ENCODE measurements at regions of chr12 and their contacts with region 1.

Region 1: GRCh38 chr12:575948-576612 is 87.2 kb downstream of the NINJ2 start:
- DNase-seq: peak; percentile 40
- ATAC-seq: peak; percentile 99
- H3K4me3 ChIP-seq: no peak overlapping the region
- H3K27ac ChIP-seq: peak overlapping the region; percentile 26
- H3K4me1 ChIP-seq: peaks cover 10% of the 10 kb centered on the region
- H3K27me3 ChIP-seq: no peaks in the 10 kb centered on the region
- CTCF ChIP-seq: peak; percentile 90 to 99 (median 96)
- EP300 ChIP-seq: no peak
- POLR2A ChIP-seq: peak; percentile 59
- RAD21 ChIP-seq: peak; percentile 79

Region 2: GRCh38 chr12:630656-631632 is 54.9 kb after region 1 on chr12:
- CTCF ChIA-PET with region 1: interaction called, 18 read pairs
- POLR2A ChIA-PET with region 1: interaction called, 3 read pairs
- RAD21 ChIA-PET with region 1: no interaction called
- SMC1A ChIA-PET with region 1: interaction called, 3 read pairs
- in situ Hi-C with region 1: no loop called
- intact Hi-C with region 1: no loop called
- DNase-seq: no peak
- ATAC-seq: peak; percentile 98
- H3K4me3 ChIP-seq: peak overlapping the region; percentile 60
- H3K27ac ChIP-seq: peak overlapping the region; percentile 92
- H3K4me1 ChIP-seq: peaks cover 16% of the 10 kb centered on the region
- H3K27me3 ChIP-seq: no peaks in the 10 kb centered on the region
- CTCF ChIP-seq: no peak
- EP300 ChIP-seq: no peak
- POLR2A ChIP-seq: peak; percentile 86
- RAD21 ChIP-seq: no peak

Region 3: DNA sequence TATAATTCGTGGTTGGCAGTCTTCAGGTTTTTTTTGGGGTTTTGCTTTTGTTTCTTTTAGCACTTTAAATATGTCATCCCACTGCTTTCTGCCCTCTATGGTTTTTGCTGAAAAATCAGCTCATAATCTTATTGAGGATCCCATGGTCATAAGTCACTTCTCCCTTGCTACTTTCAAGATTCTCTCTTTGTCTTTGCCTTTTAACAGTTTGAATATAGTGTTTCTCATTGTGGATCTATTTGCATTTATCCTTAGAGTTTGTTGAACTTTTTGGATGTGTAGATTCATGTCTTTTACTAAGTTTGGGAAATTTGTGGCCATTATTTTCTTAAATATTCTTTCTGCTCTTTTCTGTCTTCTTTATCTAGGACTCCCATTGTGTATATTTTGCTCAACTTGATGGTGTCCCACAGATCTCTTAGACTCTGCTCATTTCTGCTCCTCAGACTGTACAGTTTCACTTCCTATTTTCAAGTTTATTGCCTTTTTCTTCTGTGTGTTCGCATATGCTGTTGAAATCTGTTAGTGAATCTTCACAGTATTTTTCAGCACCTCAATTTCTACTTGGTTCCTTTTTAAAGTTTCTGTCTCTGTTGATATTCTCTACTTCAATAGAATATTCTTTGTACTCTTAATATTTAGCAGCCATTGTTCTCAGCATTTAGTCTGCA is 247.1 kb after region 1 on chr12:
- CTCF ChIA-PET with region 1: interaction called, 50 read pairs
- POLR2A ChIA-PET with region 1: no interaction called
- RAD21 ChIA-PET with region 1: no interaction called
- SMC1A ChIA-PET with region 1: interaction called, 39 read pairs
- in situ Hi-C with region 1: no loop called
- intact Hi-C with region 1: no loop called
- DNase-seq: peak; percentile 82
- ATAC-seq: peak; percentile 99
- H3K4me3 ChIP-seq: peak overlapping the region; percentile 21; the same call in 1 of the 2 replicates
- H3K27ac ChIP-seq: peak overlapping the region; percentile 54
- H3K4me1 ChIP-seq: peaks cover 14% of the 10 kb centered on the region; the same call in 1 of the 2 replicates
- H3K27me3 ChIP-seq: no peaks in the 10 kb centered on the region
- CTCF ChIP-seq: no peak
- EP300 ChIP-seq: peak in 1 of 2 experiments; percentile 82; a peak in 2 of 4 replicates
- POLR2A ChIP-seq: no peak
- RAD21 ChIP-seq: no peak